Mammary epithelial cell (primary cell): ENCODE measurements at regions of chr4 and their contacts with region 1.

Region 1: DNA sequence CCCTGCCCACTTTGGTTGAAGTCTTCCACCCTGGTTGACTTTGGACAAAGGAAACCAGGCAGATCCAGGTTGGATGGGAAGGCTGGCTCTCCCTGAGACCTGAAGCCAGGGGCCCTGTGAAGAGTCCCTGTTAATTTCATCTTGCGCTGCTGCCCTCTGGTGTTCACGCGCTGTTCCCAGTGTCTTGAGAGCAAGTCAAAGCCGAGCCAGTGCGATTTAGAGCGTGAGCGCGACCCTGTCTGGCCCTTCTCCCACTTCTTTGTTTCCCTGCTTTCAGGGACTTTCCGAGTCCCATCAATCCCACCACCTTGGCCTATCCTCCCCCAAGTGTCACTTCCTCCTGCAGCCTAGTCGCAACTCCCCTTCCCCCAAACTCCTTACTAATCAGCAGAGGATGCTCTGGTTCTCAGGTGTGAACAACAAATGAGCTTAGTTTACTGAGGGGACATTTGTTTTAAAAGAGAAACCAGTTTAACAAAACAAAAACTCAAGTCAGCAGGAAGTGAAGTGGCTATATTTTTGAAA is 25.8 kb upstream of the CHRNA9 start:
- DNase-seq: peak; percentile 74
- H3K4me3 ChIP-seq: peak overlapping the region in 1 of 3 experiments; percentile 29
- H3K27ac ChIP-seq: peak overlapping the region; percentile 22
- H3K4me1 ChIP-seq: no peaks in the 10 kb centered on the region
- H3K27me3 ChIP-seq: no peaks in the 10 kb centered on the region
- CTCF ChIP-seq: peak; percentile 81 to 93

Region 2: GRCh38 chr4:40216622-40217366 is 92.5 kb before region 1 on chr4:
- CTCF ChIA-PET with region 1: no interaction called
- dilution Hi-C with region 1: loop called (anchors 5 kb)
- in situ Hi-C with region 1: no loop called
- intact Hi-C with region 1: no loop called
- DNase-seq: no peak
- H3K4me3 ChIP-seq: no peak overlapping the region
- H3K27ac ChIP-seq: no peak overlapping the region
- H3K4me1 ChIP-seq: no peaks in the 10 kb centered on the region
- H3K27me3 ChIP-seq: no peaks in the 10 kb centered on the region
- CTCF ChIP-seq: no peak